Caco-2 (cell line): ENCODE measurements at regions of chr7 and their contacts with region 1.

Region 1: DNA sequence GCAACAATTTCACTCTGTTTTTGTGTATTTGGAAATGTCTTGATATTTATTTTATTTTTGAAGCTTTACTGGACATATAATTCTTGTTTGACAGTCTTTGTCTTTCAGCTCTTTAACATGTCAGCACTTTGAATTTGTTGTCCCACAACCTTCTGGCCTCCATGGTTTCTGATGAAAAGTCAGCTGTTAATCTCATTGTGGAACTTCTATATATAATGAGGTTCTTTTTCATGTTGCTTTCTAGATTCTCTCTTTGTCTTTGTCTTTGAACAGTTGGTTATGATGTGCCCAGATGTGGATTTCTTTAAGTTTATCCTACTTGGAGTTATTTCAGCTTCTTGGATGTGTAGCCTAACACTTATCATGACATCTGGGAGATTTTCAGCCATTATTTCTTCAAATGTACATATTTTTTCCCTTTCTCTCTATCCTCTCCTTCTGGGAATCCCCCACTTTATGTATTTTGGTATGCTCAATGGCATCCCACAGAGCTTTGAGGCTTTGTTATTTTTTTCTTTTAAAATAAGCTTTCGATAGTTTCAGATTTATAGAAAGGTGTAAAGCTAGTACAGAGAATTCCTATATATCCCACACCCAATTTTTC is 9.5 kb upstream of the LMTK2 start:
- DNase-seq: no peak
- H3K4me3 ChIP-seq: no peak overlapping the region
- H3K4me3 Mint-ChIP-seq: no peak overlapping the region
- H3K27ac Mint-ChIP-seq: no peak overlapping the region
- H3K4me1 ChIP-seq: no peaks in the 10 kb centered on the region
- H3K4me1 Mint-ChIP-seq: no peaks in the 10 kb centered on the region
- H3K27me3 ChIP-seq: peaks cover 1% of the 10 kb centered on the region; the same call in 1 of the 2 replicates
- H3K27me3 Mint-ChIP-seq: peaks cover 3% of the 10 kb centered on the region
- CTCF ChIP-seq: no peak

Region 2: DNA sequence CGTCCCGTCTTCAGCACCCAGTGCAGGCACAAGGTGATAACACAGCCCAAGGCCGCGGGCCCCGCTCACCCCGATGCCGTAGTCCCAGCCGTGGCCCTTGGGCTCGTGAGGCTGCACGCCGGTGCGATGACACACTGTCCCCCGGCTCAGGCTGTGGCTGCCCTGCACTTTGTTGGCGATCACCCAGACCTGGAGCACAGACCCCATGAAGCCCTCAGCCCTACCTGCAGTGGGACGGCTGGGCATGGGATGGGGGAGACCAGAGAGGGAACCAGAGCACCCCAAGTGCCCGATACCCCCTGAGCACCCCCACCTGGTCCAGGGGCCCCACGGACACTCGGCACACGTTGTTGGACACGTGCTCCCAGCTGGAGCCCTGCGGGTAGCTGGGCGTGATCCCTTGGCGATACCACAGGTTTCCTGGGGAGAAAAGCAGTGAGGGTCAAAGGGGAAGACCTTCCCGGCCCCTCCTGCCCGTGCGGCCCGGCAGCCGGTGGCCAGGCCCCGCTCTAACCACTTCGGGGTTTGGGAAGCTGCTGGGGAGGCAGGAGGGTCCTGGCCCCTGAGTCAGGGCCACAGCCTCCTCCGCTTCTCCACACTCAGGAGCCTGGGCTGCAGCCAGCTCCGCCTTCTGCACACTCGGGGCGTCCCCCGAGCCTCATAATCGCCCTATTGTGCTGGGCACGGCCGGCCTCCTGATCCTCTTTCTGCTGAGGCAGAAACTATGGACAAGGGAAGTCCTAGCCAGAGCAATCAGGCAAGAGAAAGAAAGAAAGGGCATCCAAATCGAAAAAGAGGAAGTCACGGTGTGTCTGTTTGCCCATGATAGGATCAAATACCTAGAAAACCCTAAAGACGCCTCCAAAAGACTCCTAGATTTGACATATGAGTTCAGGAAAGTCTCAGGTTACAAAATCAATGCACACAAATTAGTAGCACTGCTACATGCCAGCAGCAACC is 120.8 kb after region 1 on chr7:
- CTCF ChIA-PET with region 1: no interaction called
- POLR2A ChIA-PET with region 1: no interaction called
- intact Hi-C with region 1: no loop called
- DNase-seq: peak in 1 of 2 experiments; percentile 32
- H3K4me3 ChIP-seq: no peak overlapping the region
- H3K4me3 Mint-ChIP-seq: no peak overlapping the region
- H3K27ac Mint-ChIP-seq: no peak overlapping the region
- H3K4me1 ChIP-seq: no peaks in the 10 kb centered on the region
- H3K4me1 Mint-ChIP-seq: no peaks in the 10 kb centered on the region
- H3K27me3 ChIP-seq: no peaks in the 10 kb centered on the region
- H3K27me3 Mint-ChIP-seq: no peaks in the 10 kb centered on the region
- CTCF ChIP-seq: no peak

Region 3: GRCh38 chr7:98234429-98235147 is 137.4 kb after region 1 on chr7:
- CTCF ChIA-PET with region 1: no interaction called
- POLR2A ChIA-PET with region 1: interaction called, 18 read pairs
- intact Hi-C with region 1: no loop called
- DNase-seq: no peak
- H3K4me3 ChIP-seq: no peak overlapping the region
- H3K4me3 Mint-ChIP-seq: no peak overlapping the region
- H3K27ac Mint-ChIP-seq: no peak overlapping the region
- H3K4me1 ChIP-seq: no peaks in the 10 kb centered on the region
- H3K4me1 Mint-ChIP-seq: no peaks in the 10 kb centered on the region
- H3K27me3 ChIP-seq: no peaks in the 10 kb centered on the region
- H3K27me3 Mint-ChIP-seq: no peaks in the 10 kb centered on the region
- CTCF ChIP-seq: no peak